ENCODE measurements at regions of chr2 and their contacts with region 1.

Region 1: DNA sequence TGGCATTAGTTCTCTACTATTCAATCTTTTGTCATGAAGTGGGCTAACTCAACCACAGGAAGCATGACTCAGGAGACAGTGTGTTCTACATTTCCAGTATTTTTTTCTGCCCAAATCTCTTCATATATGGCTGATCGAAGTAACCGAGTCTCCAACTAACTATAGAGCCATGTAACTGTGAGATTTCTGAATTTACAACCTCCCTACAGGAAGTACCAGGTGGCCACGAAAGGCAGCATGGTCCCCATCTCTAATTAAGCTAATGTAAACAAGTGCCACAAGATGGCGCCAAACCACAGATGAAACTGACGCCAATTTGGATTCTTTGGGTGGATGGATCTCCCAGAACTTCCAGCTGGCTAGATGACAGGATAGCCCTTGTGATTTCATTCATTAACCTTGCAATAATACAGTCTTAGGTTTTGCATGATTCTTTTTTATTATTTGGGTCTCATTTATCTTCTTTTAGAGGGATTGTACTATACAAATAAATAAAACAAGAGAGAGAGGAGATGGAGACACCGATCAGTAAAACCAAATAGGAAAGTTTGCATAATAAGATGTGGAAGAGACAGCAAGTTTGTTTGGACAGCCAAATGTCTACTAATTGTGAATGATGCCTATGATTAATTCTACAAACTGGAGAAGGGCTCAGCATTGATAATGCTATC is 18.3 kb upstream of the ARHGAP15 start:
- DNase-seq: peak; percentile 83
- ATAC-seq: peak; percentile 92
- H3K4me3 Mint-ChIP-seq: peak overlapping the region; percentile 51
- H3K27ac Mint-ChIP-seq: peak overlapping the region; percentile 92
- H3K4me1 Mint-ChIP-seq: peaks cover 38% of the 10 kb centered on the region
- H3K27me3 Mint-ChIP-seq: no peaks in the 10 kb centered on the region

Region 2: GRCh38 chr2:143121079-143121478 is 10.2 kb after region 1 on chr2:
- CTCF ChIA-PET with region 1: interaction called, 40 read pairs
- POLR2A ChIA-PET with region 1: no interaction called
- DNase-seq: no peak
- ATAC-seq: no peak
- H3K4me3 Mint-ChIP-seq: no peak overlapping the region
- H3K27ac Mint-ChIP-seq: no peak overlapping the region
- H3K4me1 Mint-ChIP-seq: peaks cover 16% of the 10 kb centered on the region
- H3K27me3 Mint-ChIP-seq: no peaks in the 10 kb centered on the region

Region 3: GRCh38 chr2:143162123-143162837 is 51.4 kb after region 1 on chr2:
- CTCF ChIA-PET with region 1: interaction called, 75 read pairs
- POLR2A ChIA-PET with region 1: no interaction called
- DNase-seq: peak; percentile 67
- ATAC-seq: peak; percentile 94
- H3K4me3 Mint-ChIP-seq: no peak overlapping the region
- H3K27ac Mint-ChIP-seq: peak overlapping the region; percentile 5
- H3K4me1 Mint-ChIP-seq: peaks cover 59% of the 10 kb centered on the region
- H3K27me3 Mint-ChIP-seq: no peaks in the 10 kb centered on the region

Region 4: GRCh38 chr2:143217512-143218115 is 106.7 kb after region 1 on chr2:
- CTCF ChIA-PET with region 1: interaction called, 26 read pairs
- POLR2A ChIA-PET with region 1: no interaction called
- DNase-seq: no peak
- ATAC-seq: peak; percentile 44
- H3K4me3 Mint-ChIP-seq: no peak overlapping the region
- H3K27ac Mint-ChIP-seq: peak overlapping the region; percentile 73
- H3K4me1 Mint-ChIP-seq: peaks cover 30% of the 10 kb centered on the region
- H3K27me3 Mint-ChIP-seq: no peaks in the 10 kb centered on the region

Region 5: DNA sequence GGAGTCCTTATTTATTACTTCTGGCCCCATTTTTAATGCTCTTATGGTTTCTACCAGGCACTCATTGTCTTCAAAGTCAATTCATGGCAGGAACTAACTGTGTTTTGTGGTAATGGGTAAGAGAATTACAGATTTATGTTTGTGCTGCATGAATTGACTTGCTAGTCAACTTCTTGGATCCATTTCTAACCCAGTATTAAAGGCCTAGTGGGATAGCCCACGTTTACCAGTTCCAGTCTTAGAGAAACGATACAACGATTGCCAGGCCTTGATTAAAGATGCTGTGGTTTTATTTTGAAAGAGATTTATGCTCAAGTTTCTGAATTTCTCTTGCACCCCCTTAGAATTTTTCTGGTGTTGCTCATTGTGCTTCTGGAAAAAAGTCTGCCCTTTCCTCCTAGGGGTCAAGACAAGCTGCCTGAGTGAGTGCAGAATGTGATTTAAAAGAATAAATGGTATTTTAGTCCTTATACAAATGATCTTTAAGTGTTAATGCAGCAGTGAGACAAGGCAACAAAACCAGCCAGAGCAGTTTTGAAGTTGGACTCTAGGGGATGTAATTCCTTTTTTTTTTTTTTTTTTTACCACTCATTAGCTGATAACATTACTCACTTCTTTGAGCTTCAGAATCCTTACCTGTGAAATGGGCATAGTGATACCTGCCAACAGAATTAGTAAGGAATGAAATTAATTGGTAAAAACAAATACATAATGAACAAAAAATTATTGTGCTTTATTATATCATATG is 119.8 kb after region 1 on chr2:
- CTCF ChIA-PET with region 1: interaction called, 10 read pairs
- POLR2A ChIA-PET with region 1: no interaction called
- DNase-seq: no peak
- ATAC-seq: no peak
- H3K4me3 Mint-ChIP-seq: no peak overlapping the region
- H3K27ac Mint-ChIP-seq: peak overlapping the region; percentile 26
- H3K4me1 Mint-ChIP-seq: peaks cover 40% of the 10 kb centered on the region
- H3K27me3 Mint-ChIP-seq: no peaks in the 10 kb centered on the region

Region 6: DNA sequence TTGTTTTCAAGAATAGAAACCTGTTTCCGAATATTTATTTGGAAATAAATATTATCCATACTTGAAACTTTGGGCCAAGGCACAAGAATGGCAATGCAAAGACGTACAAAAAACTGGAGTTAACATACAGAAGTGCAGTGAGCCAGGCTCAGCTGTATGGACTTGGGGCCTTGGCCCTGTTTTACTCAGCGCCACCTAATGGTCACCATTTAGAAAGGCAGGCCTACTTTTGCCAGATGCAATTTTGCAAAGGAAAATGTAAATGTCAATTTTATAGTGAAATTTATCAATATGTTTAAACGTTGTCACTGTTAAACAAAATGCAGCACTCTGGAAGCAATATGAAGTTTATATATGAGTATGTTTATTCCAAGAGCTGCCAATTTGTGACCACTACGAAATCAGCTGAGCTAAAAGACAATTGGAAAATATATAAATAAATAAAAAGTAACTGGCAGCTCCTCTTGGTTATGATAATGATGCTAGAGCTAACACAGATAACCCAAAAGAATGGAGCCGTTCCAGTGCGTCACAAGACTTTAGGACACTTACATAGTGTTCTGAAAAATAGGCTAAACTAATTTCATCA is 173.3 kb after region 1 on chr2:
- CTCF ChIA-PET with region 1: interaction called, 23 read pairs
- POLR2A ChIA-PET with region 1: no interaction called
- DNase-seq: peak; percentile 50
- ATAC-seq: no peak
- H3K4me3 Mint-ChIP-seq: no peak overlapping the region
- H3K27ac Mint-ChIP-seq: no peak overlapping the region
- H3K4me1 Mint-ChIP-seq: peaks cover 13% of the 10 kb centered on the region
- H3K27me3 Mint-ChIP-seq: no peaks in the 10 kb centered on the region

Measured in activated CD8-positive, alpha-beta T cell treated with anti-CD3 and anti-CD28 coated beads, Interleukin-2, amount 10 ng/mL, durations not matched to agents 7 days and 5 days (primary cell).